ENCODE measurements at regions of chr1 and their contacts with region 1.

Region 1: DNA sequence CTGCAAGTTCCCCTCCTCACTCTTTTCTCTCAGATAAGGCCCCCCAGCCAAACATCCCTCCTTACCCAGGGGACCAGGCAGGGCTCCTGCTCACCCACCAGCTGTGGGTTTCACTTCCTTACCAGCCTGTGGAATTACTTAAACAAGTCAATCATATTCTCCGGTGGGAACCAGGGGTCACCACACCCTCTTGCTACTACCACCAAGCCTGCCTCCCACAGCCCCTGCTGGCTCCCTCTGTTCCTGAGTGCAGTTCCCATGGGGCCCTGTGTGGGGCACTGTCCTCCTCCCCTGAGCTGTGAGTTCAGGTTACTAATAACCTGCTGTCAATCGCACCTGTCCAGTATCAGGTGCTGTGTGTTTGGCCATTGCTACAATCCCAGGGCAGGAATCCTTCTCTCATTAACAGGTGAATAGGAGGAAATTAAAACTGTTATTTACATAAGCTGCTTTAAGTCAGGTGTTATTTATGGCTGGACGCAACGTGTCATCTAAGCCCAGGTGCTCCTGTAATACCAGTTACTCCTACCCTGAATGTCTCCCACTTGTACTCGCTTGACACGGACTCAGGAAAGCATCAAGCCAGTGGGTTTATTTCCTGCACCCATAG is 53.1 kb upstream of the LBR start:
- DNase-seq: peak in 1 of 2 donors; percentile 77
- ATAC-seq: peak; percentile 92

Region 2: DNA sequence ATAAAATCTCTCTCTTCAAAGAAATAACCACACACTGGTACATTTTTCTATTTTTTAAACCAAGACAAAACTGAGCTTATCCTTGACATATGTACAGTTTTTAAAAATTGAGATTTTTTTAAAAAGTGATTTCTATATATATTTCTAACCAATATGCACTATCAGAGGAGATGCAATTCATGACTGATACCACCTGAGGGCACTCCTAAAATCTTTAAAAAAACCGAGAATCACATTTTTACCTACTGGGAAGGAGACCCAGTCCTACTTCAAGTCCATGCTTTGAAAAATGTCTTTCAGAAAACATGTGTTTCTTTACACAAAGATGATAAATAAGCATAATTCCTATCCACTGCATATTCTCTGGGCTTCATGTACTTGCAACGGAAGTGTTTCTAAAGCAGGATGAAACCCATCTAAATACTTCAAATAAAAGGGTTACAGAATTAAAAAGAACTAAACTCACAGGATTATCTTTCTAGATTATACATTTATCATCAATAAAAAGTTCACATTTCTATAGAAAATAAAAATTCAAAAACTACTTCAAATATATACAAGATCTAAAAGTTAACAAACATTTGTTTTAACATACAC is 73.4 kb after region 1 on chr1:
- intact Hi-C with region 1: loop called in 1 of 2 experiments (anchors 10 kb)
- DNase-seq: no peak
- ATAC-seq: no peak

Region 3: GRCh38 chr1:225652729-225653462 is 172.0 kb after region 1 on chr1 and contains the start of gene ENAH:
- intact Hi-C with region 1: loop called in 1 of 2 experiments (anchors 10 kb)
- DNase-seq: peak; percentile 73 to 80
- ATAC-seq: peak; percentile 87
- total RNA-seq, gene ENAH: 29.7 to 43.3 TPM